Heart left ventricle (tissue), 16 donors: ENCODE measurements at regions of chr1 and their contacts with region 1.

Region 1: DNA sequence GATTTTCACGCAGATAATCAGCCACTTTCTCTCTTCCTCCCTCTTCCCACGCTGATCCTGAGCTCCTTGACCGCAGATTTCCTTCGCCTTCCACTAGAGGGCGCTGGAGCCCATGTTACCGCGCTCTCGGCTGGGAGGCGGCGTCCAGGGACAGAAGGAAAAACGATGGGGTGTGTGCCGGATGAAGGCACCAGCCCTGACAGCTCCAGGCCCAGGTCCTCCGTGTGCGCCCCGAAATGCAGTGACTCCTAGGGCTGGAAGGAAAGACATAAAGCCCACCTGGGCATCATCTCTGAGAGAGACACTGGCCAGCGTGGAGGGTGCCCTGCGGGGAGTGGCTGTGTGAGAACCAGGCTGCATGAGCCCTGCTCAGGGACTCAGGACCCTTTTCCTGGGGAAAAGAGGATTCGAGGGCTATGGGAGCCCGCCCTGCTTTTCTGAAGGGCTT is 44.9 kb upstream of the CYP2J2 start:
- DNase-seq: peak; percentile 55 to 84 (median 68)
- ATAC-seq: peak; percentile 45 to 92 (median 88)
- H3K4me3 ChIP-seq: no peak overlapping the region
- H3K27ac ChIP-seq: no peak overlapping the region
- H3K4me1 ChIP-seq: peaks cover 0 to 8% (median 3%) of the 10 kb centered on the region in 12 donors
- H3K27me3 ChIP-seq: peaks cover 0 to 9% (median 0%) of the 10 kb centered on the region in 9 donors
- CTCF ChIP-seq: peak; percentile 81 to 93 (median 88)
- POLR2A ChIP-seq: no peak

Region 2: DNA sequence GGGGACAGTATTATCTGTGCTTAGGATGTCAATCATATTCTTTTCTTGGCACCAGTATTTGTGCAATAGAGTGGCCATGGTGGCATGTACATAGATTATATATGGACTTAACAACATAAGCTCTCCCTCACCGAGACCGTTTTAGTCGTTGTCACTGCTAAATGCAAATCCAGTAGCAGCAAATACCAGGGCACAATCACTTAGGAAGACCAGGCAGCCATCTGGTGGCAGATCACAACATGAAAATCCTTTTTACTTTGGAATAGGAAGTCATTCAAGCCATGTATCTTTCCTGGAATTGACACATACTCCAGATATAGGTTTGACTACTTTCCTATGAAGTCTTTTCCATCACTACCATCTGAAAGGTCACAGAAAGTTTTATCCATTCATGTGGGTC is 155.2 kb after region 1 on chr1:
- intact Hi-C with region 1: loop called in 7 of 10 experiments (anchors 5 to 10 kb)
- DNase-seq: no peak
- ATAC-seq: no peak
- H3K4me3 ChIP-seq: no peak overlapping the region
- H3K27ac ChIP-seq: no peak overlapping the region
- H3K4me1 ChIP-seq: no peaks in the 10 kb centered on the region
- H3K27me3 ChIP-seq: no peaks in the 10 kb centered on the region
- CTCF ChIP-seq: peak in 2 of 12 donors; percentile 28 to 35
- POLR2A ChIP-seq: no peak

Region 3: GRCh38 chr1:60281360-60281932 is 310.0 kb after region 1 on chr1:
- intact Hi-C with region 1: loop called in 1 of 10 experiments (anchors 10 kb)
- DNase-seq: peak in 4 of 5 donors; percentile 43 to 72 (median 54)
- ATAC-seq: peak; percentile 87 to 97 (median 92)
- H3K4me3 ChIP-seq: no peak overlapping the region
- H3K27ac ChIP-seq: no peak overlapping the region
- H3K4me1 ChIP-seq: peaks cover 0 to 18% (median 8%) of the 10 kb centered on the region in 12 donors
- H3K27me3 ChIP-seq: no peaks in the 10 kb centered on the region
- CTCF ChIP-seq: peak; percentile 80 to 94 (median 90)
- POLR2A ChIP-seq: no peak

Region 4: DNA sequence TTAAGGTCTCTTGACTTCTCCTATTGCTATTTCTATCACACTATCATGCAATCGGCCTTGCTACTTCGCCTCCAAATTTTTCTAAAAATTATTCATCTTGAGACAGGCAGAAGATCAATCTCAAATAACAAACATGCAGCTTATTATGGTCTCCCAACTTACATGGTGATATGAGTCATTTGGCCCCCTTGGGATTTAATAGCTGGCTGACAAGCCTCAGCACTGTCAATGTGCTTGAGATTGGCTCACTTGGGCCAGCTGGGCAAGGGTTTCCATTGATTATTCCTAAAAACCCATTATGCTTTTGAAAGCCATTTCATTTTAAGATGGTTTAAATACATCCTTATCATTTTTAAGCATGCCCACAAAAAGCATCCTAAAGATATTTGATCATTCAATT is 886.4 kb after region 1 on chr1:
- intact Hi-C with region 1: loop called in 1 of 10 experiments (anchors 10 kb)
- DNase-seq: no peak
- ATAC-seq: no peak
- H3K4me3 ChIP-seq: no peak overlapping the region
- H3K27ac ChIP-seq: no peak overlapping the region
- H3K4me1 ChIP-seq: peaks cover 0 to 11% (median 3%) of the 10 kb centered on the region in 12 donors
- H3K27me3 ChIP-seq: no peaks in the 10 kb centered on the region
- CTCF ChIP-seq: no peak
- POLR2A ChIP-seq: no peak

Region 5: GRCh38 chr1:61028136-61028535 is 1056.6 kb after region 1 on chr1:
- intact Hi-C with region 1: loop called in 1 of 10 experiments (anchors 10 kb)
- DNase-seq: no peak
- ATAC-seq: no peak
- H3K4me3 ChIP-seq: no peak overlapping the region
- H3K27ac ChIP-seq: no peak overlapping the region
- H3K4me1 ChIP-seq: no peaks in the 10 kb centered on the region
- H3K27me3 ChIP-seq: no peaks in the 10 kb centered on the region
- CTCF ChIP-seq: no peak
- POLR2A ChIP-seq: no peak